Activated CD4-positive, alpha-beta T cell treated with anti-CD3 and anti-CD28 coated beads for 36 hours (primary cell): ENCODE measurements at regions of chr2 and their contacts with region 1.

Region 1: DNA sequence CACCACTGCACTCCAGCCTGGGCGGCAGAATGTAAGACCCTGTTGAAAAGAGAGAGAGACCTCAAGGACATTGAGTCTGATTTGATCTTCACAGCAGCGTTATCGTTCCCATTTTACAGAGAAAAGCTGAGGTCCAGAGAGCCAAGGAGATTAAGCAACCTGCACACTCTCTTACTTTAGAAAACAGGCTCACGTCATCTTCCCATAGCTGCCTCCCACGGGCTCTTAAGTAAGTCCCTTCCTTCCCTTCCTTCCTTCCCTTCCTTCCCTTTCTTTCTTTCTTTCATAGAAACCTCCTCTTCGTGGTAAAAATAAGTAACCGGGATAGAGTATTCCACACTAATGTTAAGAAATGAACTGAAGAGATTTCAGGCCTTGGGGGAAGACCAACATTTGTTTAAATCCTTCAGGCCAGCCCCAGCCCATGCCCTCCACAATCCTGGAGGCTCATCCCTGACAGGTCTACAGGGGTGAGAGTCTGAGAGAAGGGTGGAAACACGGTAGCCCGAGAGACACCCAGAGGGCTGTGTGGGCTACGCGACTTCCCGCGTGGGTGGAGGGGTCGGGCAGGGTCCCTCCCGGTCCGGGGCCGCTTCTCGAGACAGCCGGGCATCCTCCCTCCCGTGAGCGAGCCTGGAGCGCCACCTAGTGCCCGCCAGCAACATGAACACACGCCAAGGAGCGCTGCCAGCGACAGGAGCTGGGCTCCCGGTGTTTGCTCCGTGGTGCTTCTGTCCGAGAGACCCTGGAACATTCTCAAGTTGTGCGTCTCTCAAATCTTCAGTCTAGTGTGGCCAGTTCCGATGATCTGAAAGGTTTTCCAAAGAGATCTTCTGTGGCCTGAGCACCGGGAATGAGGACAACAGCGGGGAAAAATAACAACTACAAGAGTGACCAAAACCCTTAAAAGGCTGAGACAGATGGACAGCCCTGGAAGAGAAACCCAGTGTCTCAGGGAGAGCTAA is 160.3 kb downstream of the INO80D start:
- DNase-seq: peak; percentile 88
- ATAC-seq: peak; percentile 98
- H3K4me3 Mint-ChIP-seq: no peak overlapping the region
- H3K27ac Mint-ChIP-seq: no peak overlapping the region
- H3K4me1 Mint-ChIP-seq: peaks cover 7% of the 10 kb centered on the region
- H3K27me3 Mint-ChIP-seq: peaks cover 45% of the 10 kb centered on the region

Region 2: DNA sequence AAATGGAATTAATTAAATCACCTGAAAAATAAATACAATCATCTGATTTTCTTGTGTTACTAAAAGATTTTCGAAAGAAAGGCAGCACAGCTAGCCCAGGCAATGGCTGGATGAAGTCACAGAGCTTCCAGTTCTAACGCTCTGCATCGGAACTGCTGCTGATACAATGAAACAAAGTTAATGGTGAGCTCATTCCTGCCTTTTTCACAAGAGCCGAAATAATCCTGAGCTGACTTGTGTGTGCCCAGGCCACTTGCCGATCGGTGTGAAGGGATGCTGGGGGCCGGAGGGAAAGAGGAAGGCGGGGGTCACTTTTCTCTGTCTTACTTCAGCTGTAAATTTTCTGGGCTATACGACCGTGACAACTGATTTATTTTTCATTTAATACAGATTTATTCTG is 10.8 kb after region 1 on chr2:
- CTCF ChIA-PET with region 1: interaction called, 18 read pairs
- POLR2A ChIA-PET with region 1: no interaction called
- intact Hi-C with region 1: no loop called
- DNase-seq: no peak
- ATAC-seq: no peak
- H3K4me3 Mint-ChIP-seq: no peak overlapping the region
- H3K27ac Mint-ChIP-seq: no peak overlapping the region
- H3K4me1 Mint-ChIP-seq: no peaks in the 10 kb centered on the region
- H3K27me3 Mint-ChIP-seq: no peaks in the 10 kb centered on the region

Region 3: GRCh38 chr2:206296128-206296527 is 370.5 kb after region 1 on chr2:
- CTCF ChIA-PET with region 1: no interaction called
- POLR2A ChIA-PET with region 1: no interaction called
- intact Hi-C with region 1: no loop called
- DNase-seq: no peak
- ATAC-seq: no peak
- H3K4me3 Mint-ChIP-seq: no peak overlapping the region
- H3K27ac Mint-ChIP-seq: no peak overlapping the region
- H3K4me1 Mint-ChIP-seq: no peaks in the 10 kb centered on the region
- H3K27me3 Mint-ChIP-seq: peaks cover 2% of the 10 kb centered on the region